GM18951 (cell line): ENCODE measurements at regions of chr20 and their contacts with region 1.

Region 1: DNA sequence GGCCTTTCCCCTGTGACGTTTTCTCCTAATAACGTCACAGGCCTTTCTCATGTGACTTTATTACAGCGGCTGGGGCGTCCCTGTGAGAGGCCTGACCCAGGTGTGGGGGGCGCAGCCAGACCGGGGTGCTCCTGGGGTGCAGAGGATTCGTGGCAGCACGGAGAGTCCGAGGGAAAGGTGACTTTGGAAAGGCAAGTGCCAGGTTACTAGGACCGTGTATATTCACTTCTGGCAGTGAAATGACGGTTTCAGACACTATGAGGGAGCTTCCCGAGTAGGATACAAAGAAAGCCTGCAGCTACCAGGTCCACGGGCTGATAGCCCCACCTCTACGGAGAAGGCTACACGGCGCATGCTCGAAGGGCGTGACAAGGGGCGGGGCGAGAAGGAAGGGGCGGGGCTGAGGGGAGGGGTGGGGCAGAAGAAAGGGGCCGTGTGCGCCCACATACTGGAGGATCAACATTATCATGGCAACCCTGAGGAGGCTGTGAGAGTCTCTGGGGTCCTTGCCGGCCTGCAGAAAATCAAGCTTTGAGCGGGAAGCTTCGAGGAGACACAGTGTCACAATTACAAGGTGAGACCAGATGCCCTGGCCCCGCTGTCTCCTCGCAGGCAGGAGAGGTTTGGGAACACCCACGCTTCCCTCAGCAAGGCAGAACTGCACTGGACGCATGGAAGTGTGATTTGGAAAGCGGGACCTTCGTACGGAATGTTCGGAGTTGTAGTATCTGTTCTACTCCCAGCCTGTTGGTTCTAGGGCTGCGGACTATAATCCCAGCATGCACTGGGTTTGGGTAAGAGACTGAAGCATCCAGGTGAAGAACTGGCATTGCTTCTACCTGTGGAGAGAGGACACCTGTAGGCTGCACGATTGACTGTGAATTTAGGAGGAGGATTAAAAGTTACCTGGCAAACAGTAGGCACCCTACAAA is 54.4 kb upstream of the ZNF337 start:
- POLR2A ChIP-seq: peak; percentile 39

Region 2: GRCh38 chr20:25865380-25866118 is 114.5 kb after region 1 on chr20:
- in situ Hi-C with region 1: loop called (anchors 25 kb)
- POLR2A ChIP-seq: no peak

Region 3: GRCh38 chr20:26295006-26295405 is 544.0 kb after region 1 on chr20:
- in situ Hi-C with region 1: no loop called
- POLR2A ChIP-seq: no peak